OCI-LY7 (cell line): ENCODE measurements at regions of chr11 and their contacts with region 1.

Region 1: DNA sequence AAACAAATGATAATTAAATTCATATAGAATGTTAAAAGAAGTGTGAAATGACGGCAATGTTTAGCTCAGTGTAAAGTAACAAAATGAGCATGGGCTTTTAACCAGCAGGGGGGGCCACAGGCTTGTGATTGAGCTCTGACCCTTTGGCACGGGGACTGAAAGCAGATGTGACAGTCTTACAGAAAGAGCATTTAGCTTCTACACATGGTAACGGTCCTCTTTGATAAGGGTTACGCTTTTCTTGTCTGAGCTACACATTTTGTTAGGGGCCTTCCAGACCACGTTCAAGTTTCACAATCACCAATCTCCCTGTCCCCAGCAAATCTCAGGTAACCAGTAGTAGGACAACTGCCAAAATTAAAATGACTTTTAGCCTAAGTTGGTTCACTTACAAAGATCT is 262.5 kb downstream of the DCDC1 start:
- DNase-seq: peak; percentile 37
- H3K4me3 ChIP-seq: no peak overlapping the region
- H3K27ac ChIP-seq: no peak overlapping the region
- H3K4me1 ChIP-seq: no peaks in the 10 kb centered on the region
- CTCF ChIP-seq: peak; percentile 80

Region 2: GRCh38 chr11:31141789-31142188 is 34.7 kb after region 1 on chr11:
- CTCF ChIA-PET with region 1: no interaction called
- POLR2A ChIA-PET with region 1: no interaction called
- intact Hi-C with region 1: no loop called
- DNase-seq: no peak
- H3K4me3 ChIP-seq: no peak overlapping the region
- H3K27ac ChIP-seq: no peak overlapping the region
- H3K4me1 ChIP-seq: no peaks in the 10 kb centered on the region
- CTCF ChIP-seq: no peak

Region 3: DNA sequence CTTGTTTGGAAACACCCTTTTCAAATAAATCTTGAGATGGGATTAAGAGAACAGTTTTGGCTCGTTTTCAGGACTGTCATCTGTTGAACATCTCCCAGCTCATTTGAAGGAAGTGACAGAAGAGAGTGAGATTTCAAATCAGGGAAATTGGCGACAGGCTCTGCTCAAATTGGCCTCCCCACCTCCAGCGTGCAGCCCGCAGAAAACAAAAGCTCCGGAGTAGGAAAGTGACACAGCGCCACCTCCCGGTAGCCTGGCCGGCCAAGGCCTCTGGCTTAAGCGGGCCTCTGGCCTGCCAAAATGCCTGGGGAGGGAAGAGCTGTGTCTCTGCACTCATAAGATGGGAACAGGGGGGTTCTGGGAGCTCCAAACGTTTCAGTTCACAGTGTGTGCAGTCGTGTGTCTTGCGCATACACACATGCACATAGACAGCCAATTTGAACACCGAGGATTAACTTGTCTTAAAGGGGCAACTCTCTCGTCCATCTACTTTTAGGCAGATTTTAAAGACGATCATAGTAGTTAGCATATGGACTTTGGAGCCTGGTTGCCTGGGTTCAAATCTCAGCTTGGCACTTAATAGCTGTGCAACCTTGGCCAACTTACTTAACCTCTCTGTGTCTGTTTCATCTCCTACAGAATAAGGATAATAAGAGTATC is 851.1 kb after region 1 on chr11:
- CTCF ChIA-PET with region 1: no interaction called
- POLR2A ChIA-PET with region 1: no interaction called
- intact Hi-C with region 1: loop called (anchors 5 kb)
- DNase-seq: peak; percentile 35
- H3K4me3 ChIP-seq: no peak overlapping the region
- H3K27ac ChIP-seq: no peak overlapping the region
- H3K4me1 ChIP-seq: no peaks in the 10 kb centered on the region
- CTCF ChIP-seq: peak; percentile 80